Activated CD4-positive, alpha-beta memory T cell treated with anti-CD3 and anti-CD28 coated beads, Interleukin-2, amount 10 ng/mL, durations not matched to agents 7 days and 5 days (primary cell): ENCODE measurements at regions of chr1 and their contacts with region 1.

Region 1: GRCh38 chr1:150578965-150579798 is at the start of gene MCL1:
- DNase-seq: peak; percentile 93
- H3K4me3 Mint-ChIP-seq: peak within 1 kb of the TSS; percentile 98
- H3K27ac Mint-ChIP-seq: peak within 1 kb of the TSS; percentile 97
- H3K4me1 Mint-ChIP-seq: peaks cover 26% of the 10 kb centered on the region
- H3K27me3 Mint-ChIP-seq: no peaks in the 10 kb centered on the region
- total RNA-seq, gene MCL1: 470 to 472 TPM

Region 2: GRCh38 chr1:150464422-150464826 is 114.8 kb before region 1 on chr1:
- CTCF ChIA-PET with region 1: no interaction called
- POLR2A ChIA-PET with region 1: no interaction called
- DNase-seq: peak; percentile 64
- H3K4me3 Mint-ChIP-seq: no peak overlapping the region
- H3K27ac Mint-ChIP-seq: no peak overlapping the region
- H3K4me1 Mint-ChIP-seq: peaks cover 3% of the 10 kb centered on the region
- H3K27me3 Mint-ChIP-seq: no peaks in the 10 kb centered on the region

Region 3: GRCh38 chr1:150498342-150498741 is 80.8 kb before region 1 on chr1:
- CTCF ChIA-PET with region 1: no interaction called
- POLR2A ChIA-PET with region 1: no interaction called
- DNase-seq: no peak
- H3K4me3 Mint-ChIP-seq: no peak overlapping the region
- H3K27ac Mint-ChIP-seq: no peak overlapping the region
- H3K4me1 Mint-ChIP-seq: no peaks in the 10 kb centered on the region
- H3K27me3 Mint-ChIP-seq: no peaks in the 10 kb centered on the region

Region 4: GRCh38 chr1:150596095-150596892 is 17.1 kb after region 1 on chr1:
- CTCF ChIA-PET with region 1: no interaction called
- POLR2A ChIA-PET with region 1: interaction called, 14 read pairs
- DNase-seq: no peak
- H3K4me3 Mint-ChIP-seq: no peak overlapping the region
- H3K27ac Mint-ChIP-seq: peak overlapping the region; percentile 70
- H3K4me1 Mint-ChIP-seq: peaks cover 19% of the 10 kb centered on the region
- H3K27me3 Mint-ChIP-seq: no peaks in the 10 kb centered on the region

Region 5: DNA sequence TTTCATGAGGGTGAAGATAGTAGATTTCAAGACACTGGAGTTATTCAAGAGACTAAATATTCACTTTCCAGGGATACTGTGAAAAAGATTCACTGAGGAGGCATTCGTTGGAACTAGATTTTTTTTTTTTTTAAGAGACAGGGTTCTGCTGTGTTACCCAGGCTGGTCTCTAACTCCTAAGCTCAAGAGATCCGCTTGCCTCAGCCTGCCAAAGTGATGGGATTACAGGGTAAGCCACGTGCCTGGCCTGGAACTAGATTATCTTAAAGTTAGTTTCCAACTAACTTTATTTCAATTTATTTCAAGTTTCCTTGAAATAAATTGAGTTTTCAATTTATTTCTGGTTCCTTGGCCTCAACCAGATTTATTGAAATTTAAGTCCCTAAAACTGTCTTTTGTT is 24.5 kb after region 1 on chr1:
- CTCF ChIA-PET with region 1: interaction called, 3 read pairs
- POLR2A ChIA-PET with region 1: interaction called, 13 read pairs
- DNase-seq: no peak
- H3K4me3 Mint-ChIP-seq: no peak overlapping the region
- H3K27ac Mint-ChIP-seq: no peak overlapping the region
- H3K4me1 Mint-ChIP-seq: peaks cover 15% of the 10 kb centered on the region
- H3K27me3 Mint-ChIP-seq: no peaks in the 10 kb centered on the region

Region 6: GRCh38 chr1:150613061-150613920 is 34.1 kb after region 1 on chr1:
- CTCF ChIA-PET with region 1: interaction called, 7 read pairs
- POLR2A ChIA-PET with region 1: interaction called, 251 read pairs
- DNase-seq: peak; percentile 62
- H3K4me3 Mint-ChIP-seq: peak overlapping the region; percentile 40
- H3K27ac Mint-ChIP-seq: peak overlapping the region; percentile 82
- H3K4me1 Mint-ChIP-seq: peaks cover 69% of the 10 kb centered on the region
- H3K27me3 Mint-ChIP-seq: no peaks in the 10 kb centered on the region

Region 7: DNA sequence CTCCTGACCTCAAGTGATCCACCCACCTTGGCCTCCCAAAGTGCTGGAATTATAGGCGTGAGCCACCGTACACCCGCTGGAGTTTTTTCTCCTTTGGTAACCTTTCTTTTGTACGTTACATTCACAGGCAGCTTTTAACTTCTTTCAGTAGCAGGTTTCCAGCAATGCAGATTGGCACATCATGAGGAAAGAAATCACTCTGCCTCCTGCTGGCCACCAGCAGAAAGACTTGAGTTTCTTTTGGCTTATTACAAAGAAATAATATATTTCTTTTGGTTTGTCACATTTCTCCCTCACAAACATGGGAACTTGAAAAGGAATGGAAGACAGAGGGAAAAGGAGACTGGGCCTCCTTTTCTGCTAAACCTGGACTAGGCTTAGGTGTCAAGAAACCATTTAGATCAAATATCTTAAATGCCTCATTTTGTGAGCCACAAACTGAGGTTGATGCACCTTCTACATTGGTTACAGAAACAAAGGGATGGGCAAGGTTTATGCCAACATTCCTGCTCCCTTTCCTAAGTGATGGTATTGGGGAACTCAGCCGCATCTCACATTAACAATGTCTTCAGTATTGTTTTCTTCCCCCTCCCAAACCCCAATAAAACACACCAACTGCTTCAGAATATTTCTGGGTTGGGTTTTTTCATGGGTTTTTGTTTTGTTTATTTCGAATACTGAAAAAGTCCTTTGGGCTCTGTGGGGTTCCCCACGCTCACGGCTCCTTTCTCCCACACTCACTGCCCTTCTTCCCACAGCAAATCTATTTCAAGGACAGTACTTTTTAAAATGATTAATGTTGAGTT is 42.5 kb after region 1 on chr1:
- CTCF ChIA-PET with region 1: interaction called, 48 read pairs
- POLR2A ChIA-PET with region 1: interaction called, 251 read pairs
- DNase-seq: peak; percentile 70
- H3K4me3 Mint-ChIP-seq: no peak overlapping the region
- H3K27ac Mint-ChIP-seq: peak overlapping the region; percentile 76
- H3K4me1 Mint-ChIP-seq: peaks cover 76% of the 10 kb centered on the region
- H3K27me3 Mint-ChIP-seq: no peaks in the 10 kb centered on the region

Region 8: GRCh38 chr1:150629115-150629928 is 50.1 kb after region 1 on chr1 and contains the start of gene ENSA:
- CTCF ChIA-PET with region 1: interaction called, 48 read pairs
- POLR2A ChIA-PET with region 1: interaction called, 251 read pairs
- DNase-seq: peak; percentile 97
- H3K4me3 Mint-ChIP-seq: no peak within 1 kb of the TSS
- H3K27ac Mint-ChIP-seq: no peak within 1 kb of the TSS
- H3K4me1 Mint-ChIP-seq: peaks cover 28% of the 10 kb centered on the region
- H3K27me3 Mint-ChIP-seq: no peaks in the 10 kb centered on the region
- total RNA-seq, gene ENSA: 221 to 223 TPM

Region 9: DNA sequence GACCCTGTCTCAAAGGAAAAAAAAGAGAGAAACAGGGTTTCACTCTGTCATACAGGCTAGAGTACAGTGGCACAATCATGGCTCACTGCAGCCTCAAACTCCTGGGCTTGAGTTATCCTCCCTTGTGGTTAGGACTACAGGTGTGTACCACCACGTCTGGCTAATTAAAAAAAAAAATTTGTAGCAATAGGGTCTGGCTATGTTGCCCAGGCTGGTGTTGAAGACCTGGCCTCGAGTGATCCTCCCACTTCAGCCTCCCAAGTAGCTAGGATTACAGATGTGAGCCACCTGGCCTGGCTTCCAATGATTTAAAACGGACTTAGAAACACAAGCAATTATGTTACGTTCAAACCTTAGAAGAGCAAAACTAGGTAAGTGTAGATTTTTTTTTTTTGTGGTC is 95.7 kb after region 1 on chr1:
- CTCF ChIA-PET with region 1: no interaction called
- POLR2A ChIA-PET with region 1: no interaction called
- DNase-seq: no peak
- H3K4me3 Mint-ChIP-seq: no peak overlapping the region
- H3K27ac Mint-ChIP-seq: no peak overlapping the region
- H3K4me1 Mint-ChIP-seq: peaks cover 6% of the 10 kb centered on the region
- H3K27me3 Mint-ChIP-seq: no peaks in the 10 kb centered on the region

Region 10: GRCh38 chr1:150696590-150697524 is 117.7 kb after region 1 on chr1 and contains the start of gene GOLPH3L:
- CTCF ChIA-PET with region 1: interaction called, 4 read pairs
- POLR2A ChIA-PET with region 1: interaction called, 13 read pairs
- DNase-seq: peak; percentile 93
- H3K4me3 Mint-ChIP-seq: peak within 1 kb of the TSS; percentile 100
- H3K27ac Mint-ChIP-seq: peak within 1 kb of the TSS; percentile 82
- H3K4me1 Mint-ChIP-seq: peaks cover 23% of the 10 kb centered on the region
- H3K27me3 Mint-ChIP-seq: peaks cover 8% of the 10 kb centered on the region
- total RNA-seq, gene GOLPH3L: 24.8 to 26.5 TPM